ENCODE measurements at regions of chr4 and their contacts with region 1.

Region 1: DNA sequence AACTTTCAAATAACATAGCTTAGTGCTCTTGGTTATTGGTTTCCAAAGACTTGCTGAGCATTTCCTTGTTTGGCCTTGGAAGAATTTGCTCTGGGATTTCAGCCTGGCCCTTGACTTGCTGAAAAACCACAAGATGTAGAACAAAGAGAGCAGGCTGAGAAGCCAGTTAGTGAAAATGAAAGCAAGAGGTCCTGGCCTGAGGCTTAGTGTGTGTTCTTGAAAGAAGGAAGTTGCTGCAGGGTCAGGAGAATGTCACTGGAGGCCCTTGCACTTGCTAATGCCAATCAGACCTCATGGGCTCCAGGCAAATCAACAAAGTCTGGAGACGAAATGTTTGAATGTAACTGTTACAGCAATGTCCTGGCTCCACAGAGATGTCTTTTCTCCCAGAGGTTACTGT is 79.4 kb downstream of the SYNPO2 start:
- DNase-seq: no peak
- ATAC-seq: peak; percentile 82

Region 2: GRCh38 chr4:118740869-118741268 is 227.1 kb before region 1 on chr4:
- intact Hi-C with region 1: loop called (anchors 10 kb)
- DNase-seq: no peak
- ATAC-seq: peak; percentile 22

Region 3: DNA sequence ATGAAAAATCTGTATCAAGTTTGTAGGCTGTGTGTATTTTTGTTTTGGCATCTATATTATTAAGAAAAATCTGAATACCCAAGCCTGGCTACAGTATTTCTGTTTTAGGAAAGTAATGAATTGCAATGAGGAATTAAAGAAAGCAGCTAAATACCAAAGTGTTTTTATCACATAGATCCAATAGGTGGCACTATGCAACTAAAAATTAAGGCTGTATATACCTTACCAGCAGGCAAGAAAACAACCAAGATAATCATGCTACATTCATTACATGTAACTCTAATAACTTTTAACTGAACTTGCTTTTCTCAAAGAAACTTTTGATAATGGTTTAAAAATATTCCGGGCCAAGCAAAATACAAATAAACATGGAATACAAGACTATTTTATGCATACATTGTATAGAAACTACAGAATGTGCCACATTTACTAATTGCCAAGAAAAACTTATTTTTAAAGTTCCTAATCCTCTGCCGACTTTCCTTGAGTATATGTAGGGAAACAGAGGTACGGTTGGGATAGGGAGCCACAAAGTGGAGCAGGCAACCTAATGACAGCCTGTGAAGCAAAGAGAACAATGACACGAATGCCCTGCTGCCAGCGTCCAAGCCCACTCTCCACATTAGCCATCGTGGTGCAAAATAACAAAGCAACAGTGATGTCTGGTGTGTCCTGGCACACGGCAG is 195.8 kb before region 1 on chr4:
- intact Hi-C with region 1: loop called (anchors 5 kb)
- DNase-seq: no peak
- ATAC-seq: peak; percentile 78

Region 4: GRCh38 chr4:118898684-118899138 is 69.3 kb before region 1 on chr4:
- intact Hi-C with region 1: loop called (anchors 10 kb)
- DNase-seq: peak; percentile 80
- ATAC-seq: peak; percentile 92

Region 5: GRCh38 chr4:118918388-118918787 is 49.6 kb before region 1 on chr4:
- intact Hi-C with region 1: no loop called
- DNase-seq: no peak
- ATAC-seq: no peak

Measured in left ventricle myocardium superior (tissue), 1 donor.